Activated CD4-positive, alpha-beta T cell treated with anti-CD3 and anti-CD28 coated beads, Interleukin-2, amount 10 ng/mL, durations not matched to agents 24 days and 14 days (primary cell): ENCODE measurements at regions of chr9 and their contacts with region 1.

Region 1: GRCh38 chr9:69035438-69036308 is at the start of gene FXN:
- DNase-seq: peak; percentile 96
- H3K4me3 Mint-ChIP-seq: peak within 1 kb of the TSS; percentile 98
- H3K27ac Mint-ChIP-seq: peak within 1 kb of the TSS; percentile 93
- H3K4me1 Mint-ChIP-seq: peaks cover 17% of the 10 kb centered on the region
- H3K27me3 Mint-ChIP-seq: no peaks in the 10 kb centered on the region
- total RNA-seq, gene FXN: 45.4 and 47.3 TPM in 2 replicates

Region 2: GRCh38 chr9:69054989-69055388 is 19.3 kb after region 1 on chr9:
- intact Hi-C with region 1: loop called (anchors 2 kb)
- DNase-seq: no peak
- H3K4me3 Mint-ChIP-seq: no peak overlapping the region
- H3K27ac Mint-ChIP-seq: no peak overlapping the region
- H3K4me1 Mint-ChIP-seq: peaks cover 11% of the 10 kb centered on the region
- H3K27me3 Mint-ChIP-seq: no peaks in the 10 kb centered on the region

Region 3: DNA sequence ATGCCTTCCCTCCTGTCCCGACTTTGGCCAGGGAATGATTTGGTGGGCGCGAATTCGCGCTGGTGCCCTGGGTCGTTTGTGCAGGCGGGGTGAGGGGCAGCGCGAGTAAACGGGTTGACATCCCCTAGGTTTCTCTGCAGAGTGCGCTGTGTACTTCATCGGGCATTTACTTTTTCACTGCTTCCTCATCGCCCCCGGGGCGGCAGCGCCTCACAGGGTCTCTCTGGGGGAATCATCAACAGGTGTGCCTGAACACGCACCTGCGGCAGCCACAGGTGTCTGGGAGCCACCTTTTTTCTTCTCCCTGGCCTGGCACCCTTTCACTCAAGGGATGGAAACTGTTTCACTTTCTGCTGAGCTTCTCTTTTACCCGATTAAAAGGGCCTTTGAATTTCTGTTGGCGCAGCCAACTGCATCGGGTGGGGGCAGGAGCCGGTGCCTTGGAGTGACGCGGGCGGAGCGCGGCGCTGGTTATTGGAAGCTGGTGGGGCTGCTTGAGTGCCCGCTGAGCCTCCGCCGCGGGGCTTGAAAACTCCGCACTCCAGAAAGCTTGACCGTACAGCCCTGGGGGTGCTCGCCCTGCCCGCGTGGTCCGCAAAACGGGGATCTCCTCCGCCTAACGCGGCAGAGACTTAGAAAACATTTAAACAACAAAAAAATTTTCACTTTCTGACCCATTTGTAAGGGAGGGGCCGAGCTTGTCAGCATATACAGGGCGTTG is 86.3 kb after region 1 on chr9:
- intact Hi-C with region 1: loop called (anchors 2 kb)
- DNase-seq: peak; percentile 85
- H3K4me3 Mint-ChIP-seq: peak overlapping the region; percentile 86
- H3K27ac Mint-ChIP-seq: peak overlapping the region; percentile 25
- H3K4me1 Mint-ChIP-seq: peaks cover 8% of the 10 kb centered on the region
- H3K27me3 Mint-ChIP-seq: peaks cover 13% of the 10 kb centered on the region

Region 4: GRCh38 chr9:69174616-69175463 is 139.2 kb after region 1 on chr9:
- intact Hi-C with region 1: loop called (anchors 5 kb)
- DNase-seq: peak; percentile 80
- H3K4me3 Mint-ChIP-seq: peak overlapping the region; percentile 84
- H3K27ac Mint-ChIP-seq: peak overlapping the region; percentile 78
- H3K4me1 Mint-ChIP-seq: peaks cover 61% of the 10 kb centered on the region
- H3K27me3 Mint-ChIP-seq: peaks cover 24% of the 10 kb centered on the region